Naive thymus-derived CD4-positive, alpha-beta T cell (primary cell): ENCODE measurements at regions of chr12 and their contacts with region 1.

Region 1: DNA sequence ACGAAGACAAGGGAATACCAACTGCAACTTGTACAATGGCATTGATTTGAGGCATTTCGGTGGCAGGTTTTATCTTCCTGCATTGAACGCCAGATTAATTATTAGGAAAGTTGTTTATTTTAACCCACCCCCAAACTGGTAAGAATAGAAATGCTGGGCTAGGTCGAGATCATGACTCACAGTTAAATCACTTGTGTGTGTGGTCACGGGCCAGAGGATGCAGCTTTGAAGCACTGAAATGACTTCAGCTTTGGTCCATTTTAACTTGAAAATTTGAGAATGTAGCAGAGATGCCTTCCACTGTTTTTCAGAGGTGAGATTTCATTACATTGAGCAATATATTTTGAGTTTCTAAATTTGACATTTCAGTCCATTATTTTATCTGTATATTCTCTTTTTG is 23.6 kb upstream of the KCNH3 start:
- DNase-seq: no peak
- ATAC-seq: no peak
- H3K4me3 ChIP-seq: no peak overlapping the region
- H3K4me3 Mint-ChIP-seq: no peak overlapping the region
- H3K27ac ChIP-seq: no peak overlapping the region
- H3K27ac Mint-ChIP-seq: no peak overlapping the region
- H3K4me1 ChIP-seq: no peaks in the 10 kb centered on the region
- H3K4me1 Mint-ChIP-seq: peaks cover 0 to 6% (median 0%) of the 10 kb centered on the region in 7 donors
- H3K27me3 ChIP-seq: no peaks in the 10 kb centered on the region
- H3K27me3 Mint-ChIP-seq: no peaks in the 10 kb centered on the region

Region 2: GRCh38 chr12:49288412-49288853 is 226.8 kb before region 1 on chr12:
- CTCF ChIA-PET with region 1: interaction called, 24 read pairs
- POLR2A ChIA-PET with region 1: no interaction called
- intact Hi-C with region 1: loop called (anchors 1 kb)
- DNase-seq: peak in 8 of 9 donors; percentile 37 to 71 (median 66)
- ATAC-seq: peak; percentile 85
- H3K4me3 ChIP-seq: no peak overlapping the region
- H3K4me3 Mint-ChIP-seq: no peak overlapping the region
- H3K27ac ChIP-seq: no peak overlapping the region
- H3K27ac Mint-ChIP-seq: no peak overlapping the region
- H3K4me1 ChIP-seq: no peaks in the 10 kb centered on the region
- H3K4me1 Mint-ChIP-seq: peaks cover 0 to 1% (median 0%) of the 10 kb centered on the region in 7 donors
- H3K27me3 ChIP-seq: no peaks in the 10 kb centered on the region
- H3K27me3 Mint-ChIP-seq: peaks cover 31 to 53% (median 38%) of the 10 kb centered on the region in 5 donors

Region 3: DNA sequence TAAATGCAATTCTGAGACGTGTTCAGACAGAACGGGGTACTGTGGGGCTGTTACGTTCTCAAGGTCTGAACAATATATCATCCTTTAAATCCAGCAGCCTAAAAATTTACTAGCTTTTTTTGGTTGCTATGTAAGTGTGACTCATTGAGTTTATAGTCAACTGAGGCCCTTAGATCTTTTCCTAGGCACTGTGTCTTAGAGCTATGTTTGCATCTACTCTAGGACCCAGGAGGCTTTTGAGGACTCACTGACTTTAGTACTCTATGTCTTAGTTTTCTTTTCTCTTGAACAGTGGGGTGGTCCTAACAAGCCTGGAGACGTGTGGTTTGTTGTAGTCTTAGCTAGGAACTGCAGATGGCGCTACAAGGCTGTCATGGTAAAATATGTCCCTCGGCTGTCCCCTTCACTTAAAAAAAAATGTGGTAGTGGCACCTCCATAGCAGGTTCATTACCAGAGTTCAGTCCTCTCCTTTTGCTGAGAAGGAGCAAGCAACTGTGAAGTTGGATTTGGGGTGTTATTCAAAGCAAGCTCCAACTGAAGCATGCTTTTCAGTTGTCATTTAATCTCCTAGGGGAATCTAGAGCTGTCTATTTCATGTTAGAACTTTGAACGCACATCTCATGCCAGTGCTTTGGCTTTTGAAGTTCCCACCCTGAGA is 156.7 kb before region 1 on chr12:
- CTCF ChIA-PET with region 1: interaction called, 270 read pairs
- POLR2A ChIA-PET with region 1: interaction called, 5 read pairs
- intact Hi-C with region 1: loop called (anchors 1 kb)
- DNase-seq: peak in 7 of 9 donors; percentile 48 to 75 (median 63)
- ATAC-seq: peak; percentile 95
- H3K4me3 ChIP-seq: no peak overlapping the region
- H3K4me3 Mint-ChIP-seq: no peak overlapping the region
- H3K27ac ChIP-seq: no peak overlapping the region
- H3K27ac Mint-ChIP-seq: no peak overlapping the region
- H3K4me1 ChIP-seq: no peaks in the 10 kb centered on the region
- H3K4me1 Mint-ChIP-seq: peaks cover 0 to 7% (median 4%) of the 10 kb centered on the region in 7 donors
- H3K27me3 ChIP-seq: no peaks in the 10 kb centered on the region
- H3K27me3 Mint-ChIP-seq: peaks cover 8 to 48% (median 30%) of the 10 kb centered on the region in 5 donors

Region 4: GRCh38 chr12:49366652-49367380 is 148.4 kb before region 1 on chr12:
- CTCF ChIA-PET with region 1: interaction called, 270 read pairs
- POLR2A ChIA-PET with region 1: interaction called, 10 read pairs
- intact Hi-C with region 1: loop called in 1 of 2 experiments (anchors 2 kb)
- DNase-seq: peak; percentile 72 to 95 (median 82)
- ATAC-seq: peak; percentile 90
- H3K4me3 ChIP-seq: peak overlapping the region; percentile 90
- H3K4me3 Mint-ChIP-seq: peak overlapping the region; percentile 71 to 97 (median 88)
- H3K27ac ChIP-seq: peak overlapping the region; percentile 87
- H3K27ac Mint-ChIP-seq: peak overlapping the region; percentile 65 to 97 (median 94)
- H3K4me1 ChIP-seq: peaks cover 0 to 15% of the 10 kb centered on the region in 2 donors
- H3K4me1 Mint-ChIP-seq: peaks cover 11 to 39% (median 31%) of the 10 kb centered on the region in 7 donors
- H3K27me3 ChIP-seq: no peaks in the 10 kb centered on the region
- H3K27me3 Mint-ChIP-seq: peaks cover 0 to 2% (median 0%) of the 10 kb centered on the region in 5 donors

Region 5: DNA sequence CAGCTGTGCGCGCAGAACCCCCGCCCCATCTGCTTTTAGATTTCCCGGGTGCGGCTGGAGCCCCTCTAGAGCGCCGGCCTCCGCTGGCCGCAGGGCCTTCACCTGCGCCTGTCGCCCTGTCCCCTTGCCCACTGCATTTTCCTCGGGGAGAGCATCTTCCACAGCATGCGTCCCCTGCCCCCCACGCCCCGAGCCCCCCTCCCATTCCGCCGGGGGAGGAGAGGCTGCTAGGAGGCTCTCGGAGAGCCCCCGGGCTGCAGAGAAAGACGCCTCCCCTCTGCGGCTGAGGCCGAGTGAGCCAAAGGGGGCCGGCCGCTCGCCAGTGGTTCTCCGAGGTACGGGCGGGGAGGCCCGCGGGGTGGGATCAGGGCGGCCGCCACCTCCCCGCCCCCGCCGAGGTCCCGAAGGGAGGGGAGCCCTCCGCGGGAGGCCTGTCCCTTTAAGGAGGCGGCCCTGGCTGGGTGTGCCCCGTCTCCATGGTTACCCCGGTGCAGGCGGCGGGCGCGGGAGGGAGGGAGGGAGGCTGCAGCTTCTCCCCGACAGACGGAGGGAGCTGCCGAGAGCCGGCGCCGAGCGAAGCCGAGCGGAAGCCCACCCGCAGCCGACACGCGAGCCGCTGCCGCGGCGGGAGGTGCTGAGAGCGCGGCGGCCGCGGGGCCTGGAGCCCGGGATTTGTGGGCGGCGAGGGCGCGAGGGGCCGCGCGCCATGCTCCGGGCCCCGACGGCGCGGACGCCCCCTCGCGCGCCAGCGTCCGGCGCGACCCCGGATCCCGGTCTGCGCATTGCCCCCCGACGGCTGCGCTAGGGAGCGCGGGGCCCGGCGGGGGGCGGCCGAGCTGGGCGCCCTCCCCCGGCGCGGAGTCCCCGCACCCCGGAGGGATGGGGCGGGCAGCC is 23.5 kb after region 1 on chr12 and contains the start of gene KCNH3:
- CTCF ChIA-PET with region 1: no interaction called
- POLR2A ChIA-PET with region 1: no interaction called
- intact Hi-C with region 1: loop called in 1 of 2 experiments (anchors 2 kb)
- DNase-seq: peak; percentile 66 to 95 (median 86)
- ATAC-seq: peak; percentile 94
- H3K4me3 ChIP-seq: peak within 1 kb of the TSS; percentile 69
- H3K4me3 Mint-ChIP-seq: peak within 1 kb of the TSS; percentile 66 to 87 (median 80)
- H3K27ac ChIP-seq: peak within 1 kb of the TSS; percentile 11
- H3K27ac Mint-ChIP-seq: peak within 1 kb of the TSS in 6 of 9 donors; percentile 43 to 81 (median 64)
- H3K4me1 ChIP-seq: peaks cover 14 to 15% of the 10 kb centered on the region in 2 donors
- H3K4me1 Mint-ChIP-seq: peaks cover 13 to 37% (median 27%) of the 10 kb centered on the region in 7 donors
- H3K27me3 ChIP-seq: no peaks in the 10 kb centered on the region
- H3K27me3 Mint-ChIP-seq: peaks cover 0 to 66% (median 6%) of the 10 kb centered on the region in 5 donors
- total RNA-seq, gene KCNH3: 0.99 to 5.3 (median 3.8) TPM

Region 6: GRCh38 chr12:49580572-49581535 is 65.6 kb after region 1 on chr12:
- CTCF ChIA-PET with region 1: no interaction called
- POLR2A ChIA-PET with region 1: interaction called, 3 read pairs
- intact Hi-C with region 1: loop called in 1 of 2 experiments (anchors 2 kb)
- DNase-seq: peak; percentile 26 to 55 (median 43)
- ATAC-seq: peak; percentile 80
- H3K4me3 ChIP-seq: no peak overlapping the region
- H3K4me3 Mint-ChIP-seq: no peak overlapping the region
- H3K27ac ChIP-seq: no peak overlapping the region
- H3K27ac Mint-ChIP-seq: peak overlapping the region in 1 of 9 donors; percentile 5
- H3K4me1 ChIP-seq: peaks cover 3 to 5% of the 10 kb centered on the region in 2 donors
- H3K4me1 Mint-ChIP-seq: peaks cover 12 to 18% (median 16%) of the 10 kb centered on the region in 7 donors
- H3K27me3 ChIP-seq: no peaks in the 10 kb centered on the region
- H3K27me3 Mint-ChIP-seq: no peaks in the 10 kb centered on the region

Region 7: GRCh38 chr12:49821373-49822287 is 306.4 kb after region 1 on chr12:
- CTCF ChIA-PET with region 1: no interaction called
- POLR2A ChIA-PET with region 1: no interaction called
- intact Hi-C with region 1: no loop called
- DNase-seq: no peak
- ATAC-seq: no peak
- H3K4me3 ChIP-seq: no peak overlapping the region
- H3K4me3 Mint-ChIP-seq: peak overlapping the region; percentile 12 to 79 (median 62)
- H3K27ac ChIP-seq: peak overlapping the region; percentile 30
- H3K27ac Mint-ChIP-seq: peak overlapping the region; percentile 45 to 87 (median 68)
- H3K4me1 ChIP-seq: peaks cover 0 to 16% of the 10 kb centered on the region in 2 donors
- H3K4me1 Mint-ChIP-seq: peaks cover 23 to 54% (median 42%) of the 10 kb centered on the region in 7 donors
- H3K27me3 ChIP-seq: no peaks in the 10 kb centered on the region
- H3K27me3 Mint-ChIP-seq: peaks cover 0 to under 1% (median 0%) of the 10 kb centered on the region in 5 donors